HepG2 (cell line): ENCODE measurements at regions of chr6 and their contacts with region 1.

Region 1: DNA sequence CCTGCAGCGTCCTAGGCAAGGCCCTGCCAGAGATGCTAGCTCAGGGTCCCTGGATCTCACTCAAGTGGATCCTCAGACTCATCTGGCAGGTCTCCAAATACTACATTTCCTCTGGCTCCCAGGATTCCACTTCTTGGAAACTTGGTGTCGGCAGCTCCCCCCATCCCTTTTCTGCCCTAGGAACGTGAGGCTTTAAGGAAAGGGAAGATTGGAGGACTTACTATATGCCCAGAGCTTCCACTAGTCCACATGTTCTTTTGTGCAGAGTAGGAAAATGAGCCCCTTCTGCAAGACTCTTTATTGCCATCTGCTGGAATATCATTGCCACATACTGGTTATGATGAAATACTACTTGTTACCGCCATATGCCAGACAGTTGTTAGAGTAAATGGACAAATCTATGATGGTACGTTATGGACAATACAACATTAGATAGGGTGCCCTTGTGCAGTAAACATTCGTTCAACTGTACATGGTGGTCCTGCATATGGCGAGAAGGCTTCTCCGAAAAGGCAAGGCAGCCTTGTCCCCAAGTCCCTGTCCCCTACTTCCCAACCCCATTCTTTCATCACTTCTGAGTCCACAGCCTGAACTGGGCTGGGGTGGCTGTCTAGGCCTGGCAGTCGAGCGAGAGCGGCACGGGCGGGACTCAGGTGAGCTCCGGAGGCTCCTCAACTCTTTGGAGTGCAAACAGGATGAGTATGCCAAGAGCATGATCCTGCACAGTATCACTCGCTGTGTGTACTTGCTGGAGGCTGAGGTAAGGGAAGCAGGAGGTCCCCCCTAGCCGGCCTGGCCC is 780 bp downstream of the ARMC12 start:
- DNase-seq: peak; percentile 87
- ATAC-seq: peak; percentile 63
- H3K4me3 ChIP-seq: peak overlapping the region in 1 of 3 experiments; percentile 30; a peak in 2 of 6 replicates
- H3K27ac ChIP-seq: no peak overlapping the region
- H3K4me1 ChIP-seq: peaks cover 79% of the 10 kb centered on the region
- H3K27me3 ChIP-seq: no peaks in the 10 kb centered on the region
- CTCF ChIP-seq: peak; percentile 89
- EP300 ChIP-seq: peak in 1 of 2 experiments; percentile 62; a peak in 1 of 4 replicates
- POLR2A ChIP-seq: no peak
- RAD21 ChIP-seq: peak; percentile 85

Region 2: DNA sequence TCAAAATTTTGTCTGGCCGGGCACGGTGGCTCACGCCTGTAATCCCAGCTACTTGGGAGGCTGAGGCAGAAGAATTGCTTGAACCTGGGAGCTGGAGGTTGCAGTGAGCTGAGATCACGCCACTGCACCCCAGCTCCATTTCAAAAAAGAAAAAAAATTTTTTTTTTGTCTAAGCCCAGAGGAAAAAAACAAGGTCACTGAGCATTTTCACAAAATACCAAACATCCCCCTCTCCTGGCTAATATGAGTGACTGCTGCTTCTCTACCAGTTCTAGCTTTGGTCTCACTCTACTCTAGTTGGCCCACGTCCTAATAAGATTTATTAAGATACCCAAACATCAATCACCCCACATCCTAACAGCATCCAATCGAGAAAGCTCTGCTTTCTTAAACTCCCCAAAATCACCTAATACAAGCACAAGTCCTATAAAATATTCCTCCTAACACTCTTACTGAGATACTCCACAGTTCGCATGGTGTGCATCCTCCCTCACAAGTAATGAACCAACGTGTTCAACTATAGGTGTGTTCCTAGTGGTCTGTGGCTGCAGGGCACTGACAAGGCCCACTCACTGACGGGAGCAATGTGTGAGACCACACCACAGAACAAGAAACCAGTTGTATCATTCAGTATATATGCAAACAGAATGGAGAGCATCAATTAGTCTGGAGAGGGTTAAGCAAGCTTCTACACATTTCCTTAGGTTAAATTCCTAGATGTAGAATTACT is 113.1 kb before region 1 on chr6:
- CTCF ChIA-PET with region 1: interaction called, 4 read pairs
- POLR2A ChIA-PET with region 1: no interaction called
- in situ Hi-C with region 1: no loop called
- intact Hi-C with region 1: loop called (anchors 1 kb)
- DNase-seq: peak; percentile 47
- ATAC-seq: peak; percentile 86
- H3K4me3 ChIP-seq: no peak overlapping the region
- H3K27ac ChIP-seq: peak overlapping the region; percentile 30
- H3K4me1 ChIP-seq: peaks cover 13% of the 10 kb centered on the region
- H3K27me3 ChIP-seq: no peaks in the 10 kb centered on the region
- CTCF ChIP-seq: peak; percentile 57
- EP300 ChIP-seq: no peak
- POLR2A ChIP-seq: no peak
- RAD21 ChIP-seq: no peak

Region 3: GRCh38 chr6:35920793-35921732 is 183.5 kb after region 1 on chr6 and contains the start of gene SRPK1:
- CTCF ChIA-PET with region 1: no interaction called
- POLR2A ChIA-PET with region 1: no interaction called
- in situ Hi-C with region 1: no loop called
- intact Hi-C with region 1: no loop called
- DNase-seq: peak; percentile 87
- ATAC-seq: peak; percentile 86
- H3K4me3 ChIP-seq: peak within 1 kb of the TSS; percentile 72 to 93 (median 84)
- H3K27ac ChIP-seq: peak within 1 kb of the TSS; percentile 84
- H3K4me1 ChIP-seq: peaks cover 56% of the 10 kb centered on the region
- H3K27me3 ChIP-seq: no peaks in the 10 kb centered on the region; a peak in 1 of 5 replicates
- CTCF ChIP-seq: peak; percentile 16; the same call in 1 of the 2 replicates
- EP300 ChIP-seq: no peak
- POLR2A ChIP-seq: peak; percentile 97 to 98
- RAD21 ChIP-seq: peak; percentile 55
- total RNA-seq, gene SRPK1: 142 and 184 TPM in 2 replicates